ENCODE measurements at regions of chr7 and their contacts with region 1.

Region 1: DNA sequence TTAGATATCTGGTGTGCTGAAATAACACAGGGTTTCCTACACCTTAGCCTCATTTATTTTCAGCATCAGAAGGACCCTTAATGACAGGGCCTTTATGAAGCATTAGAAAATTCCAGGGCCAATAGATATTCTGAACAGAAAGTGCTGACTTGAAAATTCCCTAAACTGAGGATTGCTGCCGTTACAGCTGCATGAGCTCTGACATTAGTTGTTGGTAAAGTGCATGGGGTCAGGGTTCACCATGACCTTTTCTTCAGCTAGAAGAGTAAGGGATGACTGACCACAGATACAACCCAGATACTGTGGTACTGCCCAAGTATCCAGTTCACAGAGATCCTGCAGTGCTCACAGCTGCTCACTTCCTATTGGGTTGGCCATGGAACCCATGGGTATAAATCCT is 181.7 kb upstream of the SLC25A13 start:
- DNase-seq: no peak
- ATAC-seq: no peak
- H3K4me3 ChIP-seq: no peak overlapping the region
- H3K4me3 Mint-ChIP-seq: no peak overlapping the region
- H3K27ac ChIP-seq: no peak overlapping the region
- H3K27ac Mint-ChIP-seq: no peak overlapping the region
- H3K4me1 ChIP-seq: no peaks in the 10 kb centered on the region
- H3K4me1 Mint-ChIP-seq: no peaks in the 10 kb centered on the region
- H3K27me3 ChIP-seq: no peaks in the 10 kb centered on the region
- H3K27me3 Mint-ChIP-seq: no peaks in the 10 kb centered on the region
- CTCF ChIP-seq: no peak

Region 2: GRCh38 chr7:96430356-96430755 is 73.2 kb before region 1 on chr7:
- CTCF ChIA-PET with region 1: no interaction called
- POLR2A ChIA-PET with region 1: no interaction called
- intact Hi-C with region 1: loop called in 1 of 2 experiments (anchors 2 kb)
- DNase-seq: no peak
- ATAC-seq: no peak
- H3K4me3 ChIP-seq: no peak overlapping the region
- H3K4me3 Mint-ChIP-seq: no peak overlapping the region
- H3K27ac ChIP-seq: no peak overlapping the region
- H3K27ac Mint-ChIP-seq: no peak overlapping the region
- H3K4me1 ChIP-seq: no peaks in the 10 kb centered on the region
- H3K4me1 Mint-ChIP-seq: peaks cover 7% of the 10 kb centered on the region
- H3K27me3 ChIP-seq: no peaks in the 10 kb centered on the region
- H3K27me3 Mint-ChIP-seq: peaks cover 18% of the 10 kb centered on the region
- CTCF ChIP-seq: no peak

Region 3: GRCh38 chr7:96481796-96482443 is 21.7 kb before region 1 on chr7:
- CTCF ChIA-PET with region 1: no interaction called
- POLR2A ChIA-PET with region 1: no interaction called
- intact Hi-C with region 1: no loop called
- DNase-seq: no peak
- ATAC-seq: no peak
- H3K4me3 ChIP-seq: no peak overlapping the region
- H3K4me3 Mint-ChIP-seq: no peak overlapping the region
- H3K27ac ChIP-seq: no peak overlapping the region
- H3K27ac Mint-ChIP-seq: no peak overlapping the region
- H3K4me1 ChIP-seq: no peaks in the 10 kb centered on the region
- H3K4me1 Mint-ChIP-seq: peaks cover 12% of the 10 kb centered on the region
- H3K27me3 ChIP-seq: no peaks in the 10 kb centered on the region
- H3K27me3 Mint-ChIP-seq: no peaks in the 10 kb centered on the region
- CTCF ChIP-seq: no peak

Measured in CD8-positive, alpha-beta T cell (primary cell).